GM13976 (cell line): ENCODE measurements at regions of chr1 and their contacts with region 1.

Region 1: DNA sequence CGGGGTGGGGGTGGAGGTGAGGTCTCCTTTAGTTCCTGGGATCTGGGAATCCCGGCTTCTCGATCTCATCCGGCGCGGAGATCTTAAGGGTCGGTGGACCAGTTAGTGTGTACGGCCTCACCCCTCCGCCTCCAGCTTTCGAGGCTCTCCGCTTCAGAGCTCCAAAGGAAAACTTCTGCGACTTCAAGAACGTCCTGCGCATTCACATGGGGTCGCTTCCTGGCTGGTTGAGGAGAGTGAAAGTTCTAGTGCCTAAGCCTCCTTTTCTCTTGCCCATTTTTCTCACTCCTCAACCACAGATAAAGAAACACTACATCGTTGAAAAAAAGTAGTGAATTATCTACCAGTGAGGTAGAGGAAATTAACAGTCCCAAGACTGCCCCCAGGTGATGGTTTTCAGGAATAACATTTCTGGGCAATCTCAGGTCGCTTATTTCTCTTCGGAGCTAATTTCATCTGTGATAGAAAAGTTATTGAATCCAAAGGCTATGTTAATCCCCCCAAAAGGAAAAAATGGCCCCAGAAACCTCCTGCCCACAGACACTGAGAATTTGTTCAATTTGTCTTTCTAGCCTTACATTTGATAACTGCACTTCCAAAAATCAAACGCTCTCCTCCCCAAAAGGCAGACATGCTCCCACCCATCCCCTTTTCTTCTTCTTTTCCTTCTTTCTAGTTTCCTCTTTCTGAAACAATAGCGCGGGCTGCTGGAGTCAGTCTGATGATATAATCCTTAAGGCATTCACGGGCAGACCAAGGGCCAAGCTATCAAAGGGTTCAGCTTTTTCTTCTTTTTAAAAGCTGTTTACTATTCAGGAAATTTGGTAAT is 20.6 kb upstream of the TBX15 start:
- DNase-seq: peak; percentile 71
- CTCF ChIP-seq: peak; percentile 21

Region 2: GRCh38 chr1:118151312-118151937 is 857.3 kb before region 1 on chr1:
- in situ Hi-C with region 1: loop called (anchors 25 kb)
- DNase-seq: no peak
- CTCF ChIP-seq: peak; percentile 60

Region 3: DNA sequence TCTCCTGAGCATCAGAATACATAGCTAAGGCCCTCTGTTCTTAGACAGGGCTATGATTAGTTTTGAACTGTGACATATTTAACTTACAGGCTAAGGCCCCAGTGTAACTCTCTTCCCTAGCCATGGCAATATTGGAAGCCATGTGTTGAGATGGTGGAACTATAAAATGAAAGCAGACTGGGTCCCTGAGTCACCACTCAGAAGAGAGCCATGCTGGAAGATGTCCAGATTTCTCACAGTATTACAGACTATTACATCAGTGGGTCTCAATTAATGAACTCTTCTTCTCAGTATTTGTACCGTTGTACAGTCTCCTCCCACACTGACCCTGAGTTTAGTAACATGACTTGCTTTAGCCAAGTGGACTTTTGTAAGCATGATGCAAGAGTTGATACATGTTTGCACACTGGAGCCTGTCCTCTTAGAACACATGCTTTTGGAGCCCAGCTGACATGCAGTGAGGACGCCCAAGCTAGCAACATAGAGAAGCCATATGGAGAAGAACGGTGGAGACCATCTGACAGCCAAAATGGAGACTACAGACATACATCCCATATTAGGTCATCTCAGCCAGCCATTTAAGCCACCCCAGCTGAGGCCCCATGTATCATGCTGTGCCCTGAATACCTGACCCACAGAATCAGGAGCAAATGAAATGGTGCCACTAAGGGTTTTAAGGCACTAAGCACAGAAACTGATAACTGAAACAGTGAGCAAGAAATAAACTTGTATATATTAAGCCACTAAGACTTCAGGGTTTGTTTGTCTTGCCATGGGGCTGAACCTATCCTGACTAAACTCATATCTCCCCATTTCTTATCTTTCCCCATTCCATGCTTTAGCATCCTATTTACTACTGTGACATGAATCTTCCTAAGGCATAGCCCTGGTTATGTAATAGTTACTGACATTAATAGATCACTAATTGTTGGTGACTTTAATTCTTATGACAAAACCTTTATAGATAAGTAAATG is 45.0 kb before region 1 on chr1:
- in situ Hi-C with region 1: no loop called
- DNase-seq: no peak
- CTCF ChIP-seq: no peak

Region 4: GRCh38 chr1:119140177-119141019 is 131.7 kb after region 1 on chr1 and contains the start of gene WARS2:
- in situ Hi-C with region 1: no loop called
- DNase-seq: peak; percentile 91
- CTCF ChIP-seq: peak; percentile 15

Region 5: GRCh38 chr1:119209596-119210295 is 201.0 kb after region 1 on chr1:
- in situ Hi-C with region 1: no loop called
- DNase-seq: no peak
- CTCF ChIP-seq: no peak